ENCODE measurements at regions of chr7 and their contacts with region 1.

Region 1: DNA sequence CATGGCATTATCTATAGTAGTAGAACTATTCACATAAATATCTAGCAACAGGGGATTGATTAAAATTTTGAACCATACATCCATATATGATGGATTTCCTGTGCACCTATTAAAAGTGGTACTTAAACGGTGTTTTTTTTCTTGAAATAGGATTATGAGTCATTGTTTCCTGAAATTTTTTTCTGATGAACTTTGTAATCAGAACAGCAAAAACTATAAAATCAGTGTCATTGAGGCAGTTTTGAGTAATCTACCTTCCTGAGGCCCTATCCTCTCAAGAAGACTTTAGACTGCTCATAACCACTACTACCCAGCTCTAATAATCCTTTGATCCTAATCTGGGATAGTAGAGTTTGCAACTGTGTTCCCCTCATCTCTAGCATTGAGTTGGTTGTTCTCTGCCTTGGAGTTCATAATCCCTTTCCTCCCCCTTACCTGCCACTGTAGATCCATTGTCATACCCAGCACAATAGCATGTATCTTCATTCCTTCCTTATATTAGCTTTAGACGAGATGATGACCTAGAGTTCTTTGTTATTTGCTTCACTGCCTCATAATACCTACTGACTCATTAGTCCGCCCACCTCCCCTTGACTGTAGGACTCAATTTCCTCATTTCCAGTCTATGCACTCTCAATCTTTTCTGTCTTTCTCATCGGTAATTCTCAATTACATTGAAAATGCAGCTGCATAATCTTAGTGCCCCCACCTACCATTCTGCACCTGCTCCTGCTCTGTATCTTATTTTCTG is 133.4 kb downstream of the LRRC4 start:
- DNase-seq: peak; percentile 58
- H3K4me3 Mint-ChIP-seq: no peak overlapping the region
- H3K27ac Mint-ChIP-seq: no peak overlapping the region
- H3K4me1 Mint-ChIP-seq: peaks cover 15% of the 10 kb centered on the region
- H3K27me3 Mint-ChIP-seq: no peaks in the 10 kb centered on the region

Region 2: DNA sequence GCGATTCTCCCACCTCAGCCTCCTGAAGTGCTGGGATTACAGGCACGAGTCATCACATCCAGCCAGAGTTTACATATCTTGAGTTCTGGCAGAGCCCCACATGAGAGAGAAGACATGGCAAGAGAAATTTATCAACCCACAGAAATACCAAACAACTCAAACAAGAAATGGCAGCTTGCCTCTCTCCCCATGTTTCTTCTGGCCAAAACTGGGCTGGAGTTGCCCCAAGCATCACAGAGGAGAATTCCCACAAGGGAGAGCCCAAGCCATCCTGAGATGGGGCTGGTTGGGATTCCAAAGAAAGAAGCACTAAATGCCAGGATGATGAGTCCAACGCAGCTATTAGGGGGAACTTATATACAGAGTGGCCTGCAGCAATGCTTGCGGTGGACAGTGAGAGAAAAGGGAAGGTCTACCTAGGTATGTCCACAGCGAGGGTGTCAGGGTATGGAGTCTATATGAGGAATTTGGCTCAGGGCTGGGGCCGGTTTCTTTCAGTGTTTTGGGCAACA is 265.5 kb before region 1 on chr7:
- CTCF ChIA-PET with region 1: no interaction called
- intact Hi-C with region 1: no loop called
- DNase-seq: no peak
- H3K4me3 Mint-ChIP-seq: no peak overlapping the region
- H3K27ac Mint-ChIP-seq: no peak overlapping the region
- H3K4me1 Mint-ChIP-seq: peaks cover 6% of the 10 kb centered on the region
- H3K27me3 Mint-ChIP-seq: peaks cover 8% of the 10 kb centered on the region

Region 3: GRCh38 chr7:127745445-127745844 is 152.4 kb before region 1 on chr7:
- CTCF ChIA-PET with region 1: no interaction called
- intact Hi-C with region 1: loop called (anchors 1 kb)
- DNase-seq: peak; percentile 27
- H3K4me3 Mint-ChIP-seq: no peak overlapping the region
- H3K27ac Mint-ChIP-seq: peak overlapping the region; percentile 19
- H3K4me1 Mint-ChIP-seq: peaks cover 51% of the 10 kb centered on the region
- H3K27me3 Mint-ChIP-seq: no peaks in the 10 kb centered on the region

Region 4: GRCh38 chr7:127850195-127850594 is 47.7 kb before region 1 on chr7:
- CTCF ChIA-PET with region 1: no interaction called
- intact Hi-C with region 1: loop called (anchors 1 kb)
- DNase-seq: peak; percentile 68
- H3K4me3 Mint-ChIP-seq: no peak overlapping the region
- H3K27ac Mint-ChIP-seq: peak overlapping the region; percentile 84
- H3K4me1 Mint-ChIP-seq: peaks cover 39% of the 10 kb centered on the region
- H3K27me3 Mint-ChIP-seq: no peaks in the 10 kb centered on the region

Region 5: GRCh38 chr7:127920787-127921438 is 23.0 kb after region 1 on chr7:
- CTCF ChIA-PET with region 1: no interaction called
- intact Hi-C with region 1: loop called (anchors 2 kb)
- DNase-seq: no peak
- H3K4me3 Mint-ChIP-seq: no peak overlapping the region
- H3K27ac Mint-ChIP-seq: no peak overlapping the region
- H3K4me1 Mint-ChIP-seq: peaks cover 15% of the 10 kb centered on the region
- H3K27me3 Mint-ChIP-seq: no peaks in the 10 kb centered on the region

Region 6: DNA sequence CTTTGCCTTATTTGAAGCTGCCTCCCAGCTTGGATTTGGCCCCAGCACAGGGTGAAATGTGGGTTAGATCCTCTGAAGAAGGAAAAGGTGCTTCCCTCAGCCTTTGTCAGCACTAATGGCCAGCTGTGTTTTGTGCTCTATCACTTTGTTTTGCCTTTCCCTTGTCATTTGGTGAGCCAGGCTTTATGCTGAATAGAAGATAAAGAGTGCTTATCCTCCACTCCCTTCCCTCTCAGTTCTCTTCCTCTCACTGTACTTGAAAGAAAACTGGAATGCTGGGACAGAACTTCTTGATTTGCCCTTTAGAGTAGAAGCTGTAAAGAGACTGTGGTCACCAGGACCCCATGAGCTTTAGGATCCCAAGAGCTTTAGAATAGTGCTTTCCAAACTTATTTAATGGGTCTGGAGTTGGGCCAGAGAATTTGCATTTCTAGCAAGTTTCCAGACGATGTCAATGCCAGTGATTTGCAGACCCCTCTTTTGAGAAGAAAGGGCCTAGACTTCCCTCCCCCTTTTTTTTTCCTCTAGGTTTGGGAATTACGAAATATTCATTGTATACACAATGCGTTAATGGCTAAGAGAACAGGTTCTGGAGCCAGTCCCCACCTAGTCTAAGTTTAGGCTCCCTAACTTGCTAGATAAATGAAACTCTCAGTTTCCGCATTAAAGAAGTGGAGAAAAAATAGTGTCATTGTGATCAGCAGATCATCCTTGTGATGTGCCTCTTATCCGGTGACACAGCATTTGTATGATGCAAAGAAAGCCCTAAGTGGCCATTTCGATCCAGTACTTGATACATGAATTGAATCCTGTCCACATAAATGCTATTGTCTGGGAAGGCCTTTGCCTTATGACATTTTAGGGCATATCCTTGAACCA is 52.1 kb after region 1 on chr7:
- CTCF ChIA-PET with region 1: no interaction called
- intact Hi-C with region 1: no loop called
- DNase-seq: no peak
- H3K4me3 Mint-ChIP-seq: no peak overlapping the region
- H3K27ac Mint-ChIP-seq: no peak overlapping the region
- H3K4me1 Mint-ChIP-seq: no peaks in the 10 kb centered on the region
- H3K27me3 Mint-ChIP-seq: no peaks in the 10 kb centered on the region

Region 7: DNA sequence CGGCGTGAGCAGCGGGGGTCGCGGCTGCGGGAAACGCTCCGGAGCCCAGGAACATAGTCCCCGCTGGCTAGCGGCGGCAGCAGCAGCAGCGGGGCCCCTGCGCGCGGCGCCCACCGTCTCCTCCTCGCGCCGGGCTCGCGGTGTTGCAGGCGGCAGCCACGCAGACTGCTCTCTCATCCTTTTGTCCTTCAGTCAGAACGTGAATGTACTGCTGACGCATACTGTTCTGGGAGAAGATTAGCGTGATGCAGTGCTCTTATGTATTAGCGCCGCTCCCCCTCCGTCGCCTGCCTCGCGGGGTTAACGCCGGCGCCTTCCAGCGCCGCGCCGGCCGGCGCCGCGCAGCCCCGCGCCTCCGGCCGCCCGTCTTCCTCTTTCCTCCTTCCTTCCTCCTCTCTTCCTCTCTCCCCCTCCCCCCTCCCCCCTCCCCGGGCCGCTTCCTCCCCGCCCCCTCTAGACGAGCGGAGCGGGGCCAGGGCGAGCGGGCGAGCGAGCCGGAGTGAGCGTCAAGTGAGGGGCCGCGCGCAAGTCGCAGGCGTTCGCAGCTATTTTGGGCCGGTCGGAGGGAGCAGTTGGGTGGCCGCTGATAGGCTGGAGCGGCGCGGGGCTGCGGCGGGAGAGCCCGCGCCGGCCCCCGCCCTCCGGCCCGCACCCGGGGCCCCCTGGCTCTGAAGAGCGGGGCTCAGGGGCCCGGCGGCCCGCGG is 134.2 kb after region 1 on chr7:
- CTCF ChIA-PET with region 1: no interaction called
- intact Hi-C with region 1: loop called (anchors 2 kb)
- DNase-seq: peak; percentile 81
- H3K4me3 Mint-ChIP-seq: peak overlapping the region; percentile 74
- H3K27ac Mint-ChIP-seq: no peak overlapping the region
- H3K4me1 Mint-ChIP-seq: peaks cover 13% of the 10 kb centered on the region
- H3K27me3 Mint-ChIP-seq: peaks cover 6% of the 10 kb centered on the region